Dorsolateral prefrontal cortex (tissue), 120 donors: ENCODE measurements at regions of chr19 and their contacts with region 1.

Region 1: DNA sequence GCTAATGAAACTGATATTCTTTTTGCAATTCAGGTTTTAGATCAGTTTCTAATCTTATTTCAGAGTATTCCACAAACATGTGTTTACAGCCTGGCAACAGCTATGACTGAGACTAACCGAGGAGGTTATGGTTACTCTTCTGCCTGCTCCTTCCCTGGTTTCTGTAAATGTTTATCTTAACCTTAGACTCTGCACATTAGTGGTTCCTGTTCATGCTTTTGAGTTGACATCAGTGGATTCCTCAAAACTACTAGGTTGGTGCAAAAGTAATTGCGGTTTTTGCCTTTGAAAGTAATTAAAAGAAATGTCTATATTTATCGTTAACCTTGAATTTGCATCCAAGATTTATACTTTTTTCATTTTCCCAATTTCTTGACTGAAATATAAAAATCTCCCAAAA is 237.0 kb upstream of the TSHZ3 start:
- DNase-seq: no peak
- H3K4me3 ChIP-seq: no peak overlapping the region
- H3K27ac ChIP-seq: no peak overlapping the region
- H3K27me3 ChIP-seq: peaks cover 0 to 13% (median 0%) of the 10 kb centered on the region in 45 donors
- CTCF ChIP-seq: no peak

Region 2: DNA sequence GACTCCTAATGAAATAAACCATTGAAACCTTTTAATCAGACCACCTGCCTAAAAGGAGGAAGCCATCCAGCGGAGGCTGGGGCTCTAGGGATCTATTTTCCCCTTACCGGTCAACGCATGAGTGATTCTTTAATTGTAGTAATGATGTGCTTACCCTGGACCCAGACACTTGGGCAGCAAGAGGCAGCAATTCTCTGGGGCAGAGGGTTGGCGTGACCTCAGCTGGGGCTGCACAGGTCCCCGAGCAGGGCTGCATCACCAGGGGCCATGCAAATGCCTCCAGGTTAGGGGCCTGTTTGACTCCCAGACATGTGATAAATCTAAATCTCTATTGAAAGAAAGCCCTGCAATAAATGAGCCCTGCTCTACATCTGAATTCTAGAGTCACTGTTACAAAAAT is 42.8 kb before region 1 on chr19:
- intact Hi-C with region 1: no loop called
- DNase-seq: no peak
- H3K4me3 ChIP-seq: no peak overlapping the region
- H3K27ac ChIP-seq: no peak overlapping the region
- H3K27me3 ChIP-seq: peaks cover 0 to 12% (median 0%) of the 10 kb centered on the region in 45 donors
- CTCF ChIP-seq: no peak

Region 3: GRCh38 chr19:31906111-31906871 is 320.0 kb after region 1 on chr19:
- intact Hi-C with region 1: no loop called
- DNase-seq: no peak
- H3K4me3 ChIP-seq: no peak overlapping the region
- H3K27ac ChIP-seq: no peak overlapping the region
- H3K27me3 ChIP-seq: peaks cover 0 to 3% (median 0%) of the 10 kb centered on the region in 45 donors
- CTCF ChIP-seq: no peak

Region 4: DNA sequence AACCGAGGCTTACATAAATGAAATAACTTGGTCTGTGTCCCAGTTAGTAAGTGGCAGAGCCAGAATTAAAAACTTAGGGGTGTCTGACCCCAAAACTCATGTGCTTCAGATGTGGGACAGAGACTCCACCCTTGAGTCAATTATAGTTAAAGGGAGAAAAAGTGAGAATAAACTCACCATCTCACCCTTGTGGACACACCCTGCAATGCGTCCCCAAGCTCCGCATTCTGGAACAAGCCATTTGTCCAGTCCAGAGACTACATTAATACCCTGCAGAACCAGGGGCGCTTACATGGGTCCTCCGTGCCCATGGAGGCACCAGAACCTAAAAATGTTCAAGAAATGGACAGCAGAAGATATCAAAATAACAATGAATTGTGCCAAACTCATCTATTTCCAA is 552.1 kb after region 1 on chr19:
- intact Hi-C with region 1: loop called in 1 of 2 experiments (anchors 5 kb)
- DNase-seq: no peak
- H3K4me3 ChIP-seq: no peak overlapping the region
- H3K27ac ChIP-seq: no peak overlapping the region
- H3K27me3 ChIP-seq: no peaks in the 10 kb centered on the region
- CTCF ChIP-seq: no peak